IMR-90 (cell line): ENCODE measurements at regions of chr3 and their contacts with region 1.

Region 1: GRCh38 chr3:30496066-30496966 is 110.1 kb upstream of the TGFBR2 start:
- DNase-seq: peak; percentile 81
- ATAC-seq: peak; percentile 79
- H3K4me3 ChIP-seq: no peak overlapping the region
- H3K27ac ChIP-seq: peak overlapping the region; percentile 74
- H3K4me1 ChIP-seq: peaks cover 16% of the 10 kb centered on the region
- H3K27me3 ChIP-seq: no peaks in the 10 kb centered on the region
- CTCF ChIP-seq: no peak
- POLR2A ChIP-seq: no peak
- RAD21 ChIP-seq: no peak

Region 2: DNA sequence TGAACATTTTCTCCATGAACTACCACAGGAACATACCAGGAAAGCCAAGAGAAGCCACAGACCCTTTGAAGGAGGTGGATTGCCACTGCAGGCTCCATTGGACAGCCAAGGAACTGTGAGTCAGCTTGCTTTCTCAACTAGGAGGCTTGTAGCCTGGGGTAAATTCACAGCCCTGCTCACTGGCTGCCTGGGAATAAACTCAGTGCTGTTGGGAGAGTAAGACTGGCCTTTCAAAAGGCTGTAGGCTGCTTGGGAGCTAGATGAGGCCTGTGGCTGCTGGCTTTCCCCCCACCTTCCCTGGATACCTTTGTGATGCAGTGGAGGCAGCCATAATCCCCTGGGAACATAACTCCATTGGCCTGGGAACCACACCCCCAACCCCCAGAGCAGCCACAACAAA is 1439.0 kb before region 1 on chr3:
- CTCF ChIA-PET with region 1: no interaction called
- POLR2A ChIA-PET with region 1: interaction called, 11 read pairs
- dilution Hi-C with region 1: no loop called
- in situ Hi-C with region 1: no loop called
- intact Hi-C with region 1: no loop called
- DNase-seq: peak; percentile 83
- ATAC-seq: peak; percentile 93
- H3K4me3 ChIP-seq: no peak overlapping the region
- H3K27ac ChIP-seq: no peak overlapping the region
- H3K4me1 ChIP-seq: no peaks in the 10 kb centered on the region
- H3K27me3 ChIP-seq: no peaks in the 10 kb centered on the region
- CTCF ChIP-seq: no peak
- POLR2A ChIP-seq: no peak
- RAD21 ChIP-seq: no peak